Dorsolateral prefrontal cortex (tissue), 120 donors: ENCODE measurements at regions of chrX and their contacts with region 1.

Region 1: DNA sequence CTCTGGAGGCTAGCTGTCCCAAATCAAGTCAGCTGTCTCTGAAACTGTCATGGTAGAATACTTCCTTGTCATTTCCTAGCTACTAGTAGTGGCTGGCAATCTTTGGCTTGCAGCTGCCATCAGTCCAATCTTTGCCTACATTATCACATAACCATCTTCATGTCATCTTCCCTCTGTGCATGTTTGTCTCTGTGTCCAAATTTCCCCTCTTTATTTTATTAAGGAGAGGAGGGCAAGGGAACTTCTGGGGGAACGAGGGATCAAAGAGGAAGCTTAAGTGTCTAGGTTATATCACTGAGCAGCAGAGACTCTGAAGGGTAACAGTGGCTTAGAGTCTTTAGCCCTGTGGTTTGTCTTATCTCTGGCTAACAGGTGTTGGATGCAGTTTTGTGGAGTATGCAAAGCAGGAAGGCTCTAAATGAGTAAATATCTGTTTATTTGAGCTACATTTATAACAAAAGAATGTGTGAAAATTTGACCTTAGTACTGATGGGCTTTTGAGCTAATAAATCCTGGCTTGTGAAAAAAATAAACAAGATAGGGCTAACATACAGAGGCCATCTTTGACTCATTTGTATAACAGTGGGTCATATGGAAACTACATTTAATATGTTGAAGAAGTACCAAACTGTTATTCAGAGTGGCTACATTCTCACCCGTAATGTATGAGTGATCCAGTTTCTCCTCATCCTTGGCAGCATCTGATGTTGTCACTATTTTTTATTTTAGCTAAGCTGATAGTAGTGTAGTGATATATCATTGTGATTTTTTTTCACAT is 49.4 kb upstream of the ENOX2 start:
- DNase-seq: no peak
- H3K4me3 ChIP-seq: no peak overlapping the region
- H3K27ac ChIP-seq: no peak overlapping the region
- H3K27me3 ChIP-seq: peaks cover 0 to 71% (median 20%) of the 10 kb centered on the region in 45 donors
- CTCF ChIP-seq: no peak

Region 2: DNA sequence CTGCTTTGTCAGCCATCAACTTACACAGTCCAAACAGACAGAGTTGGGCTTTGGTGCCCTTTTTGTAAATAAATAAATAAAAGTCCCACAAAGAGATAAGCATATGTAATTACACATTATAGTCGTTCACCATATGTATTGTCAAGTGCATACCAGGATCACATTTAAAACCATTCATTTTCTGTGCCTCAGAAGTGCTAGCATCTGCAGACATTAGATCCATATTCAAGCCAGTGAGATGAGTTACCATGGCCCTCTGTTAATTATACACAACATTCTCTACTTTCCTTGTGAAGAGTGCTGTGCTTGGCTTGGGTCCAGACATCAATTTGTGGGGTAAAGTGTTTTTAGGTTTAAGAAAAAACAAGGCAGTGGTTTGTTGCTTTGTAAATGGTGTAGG is 126.2 kb before region 1 on chrX:
- intact Hi-C with region 1: no loop called
- DNase-seq: no peak
- H3K4me3 ChIP-seq: no peak overlapping the region
- H3K27ac ChIP-seq: no peak overlapping the region
- H3K27me3 ChIP-seq: peaks cover 0 to 44% (median 0%) of the 10 kb centered on the region in 45 donors
- CTCF ChIP-seq: no peak

Region 3: GRCh38 chrX:130887376-130887775 is 65.1 kb before region 1 on chrX:
- intact Hi-C with region 1: no loop called
- DNase-seq: no peak
- H3K4me3 ChIP-seq: peak overlapping the region in 47 of 59 donors; percentile 1 to 53 (median 33)
- H3K27ac ChIP-seq: peak overlapping the region in 7 of 59 donors; percentile 7 to 49 (median 21)
- H3K27me3 ChIP-seq: peaks cover 0 to 55% (median 10%) of the 10 kb centered on the region in 45 donors
- CTCF ChIP-seq: no peak

Region 4: DNA sequence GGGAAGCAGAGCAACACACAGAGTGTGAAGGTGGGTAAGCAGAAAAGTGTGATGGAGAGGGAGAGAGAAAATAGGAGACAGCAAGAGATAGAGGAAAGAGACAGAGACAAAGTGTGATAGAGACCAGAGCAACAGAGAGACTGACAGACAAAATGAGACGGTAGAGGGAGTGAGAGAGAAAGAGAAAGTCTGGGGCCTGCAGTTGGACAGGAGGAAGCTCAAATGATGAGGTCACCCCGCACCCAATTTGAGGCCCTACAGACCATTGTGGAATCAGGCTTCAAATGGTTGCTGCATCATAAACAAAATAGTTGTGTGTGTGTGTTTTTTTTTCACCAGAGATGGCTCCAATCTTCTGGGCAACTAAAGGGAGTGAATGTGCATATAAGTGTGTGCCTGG is 57.7 kb after region 1 on chrX:
- intact Hi-C with region 1: loop called in 1 of 2 experiments (anchors 10 kb)
- DNase-seq: no peak
- H3K4me3 ChIP-seq: no peak overlapping the region
- H3K27ac ChIP-seq: no peak overlapping the region
- H3K27me3 ChIP-seq: peaks cover 0 to 72% (median 31%) of the 10 kb centered on the region in 45 donors
- CTCF ChIP-seq: no peak